CD8-positive, alpha-beta T cell (primary cell): ENCODE measurements at regions of chr6 and their contacts with region 1.

Region 1: GRCh38 chr6:141406761-141407160 is 726.0 kb upstream of the GJE1 start:
- DNase-seq: no peak
- ATAC-seq: no peak
- H3K4me3 ChIP-seq: no peak overlapping the region
- H3K4me3 Mint-ChIP-seq: no peak overlapping the region
- H3K27ac ChIP-seq: no peak overlapping the region
- H3K27ac Mint-ChIP-seq: no peak overlapping the region
- H3K4me1 ChIP-seq: no peaks in the 10 kb centered on the region
- H3K4me1 Mint-ChIP-seq: peaks cover 6% of the 10 kb centered on the region
- H3K27me3 ChIP-seq: no peaks in the 10 kb centered on the region
- H3K27me3 Mint-ChIP-seq: no peaks in the 10 kb centered on the region
- CTCF ChIP-seq: no peak

Region 2: DNA sequence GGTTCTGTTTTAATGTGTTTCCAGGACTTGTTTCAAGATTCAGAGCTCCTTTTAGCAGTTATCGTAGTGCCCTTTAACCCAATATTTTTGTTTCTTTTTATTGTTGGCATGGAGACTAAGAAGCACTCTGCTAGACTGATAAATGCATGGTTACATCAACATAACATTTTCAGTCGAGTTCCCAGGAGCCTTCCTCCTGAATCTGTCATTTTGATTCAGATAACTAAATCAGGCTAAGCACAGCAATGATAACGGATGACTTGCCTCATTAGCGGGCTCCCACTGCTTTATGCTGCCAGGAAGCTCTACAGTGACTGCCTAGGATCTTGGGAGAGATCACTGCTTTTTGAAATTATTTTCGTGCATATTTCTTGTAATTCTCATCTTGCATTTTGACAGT is 46.8 kb before region 1 on chr6:
- CTCF ChIA-PET with region 1: no interaction called
- POLR2A ChIA-PET with region 1: no interaction called
- intact Hi-C with region 1: no loop called
- DNase-seq: no peak
- ATAC-seq: no peak
- H3K4me3 ChIP-seq: no peak overlapping the region
- H3K4me3 Mint-ChIP-seq: no peak overlapping the region
- H3K27ac ChIP-seq: no peak overlapping the region
- H3K27ac Mint-ChIP-seq: no peak overlapping the region
- H3K4me1 ChIP-seq: no peaks in the 10 kb centered on the region
- H3K4me1 Mint-ChIP-seq: no peaks in the 10 kb centered on the region
- H3K27me3 ChIP-seq: no peaks in the 10 kb centered on the region
- H3K27me3 Mint-ChIP-seq: no peaks in the 10 kb centered on the region
- CTCF ChIP-seq: no peak

Region 3: DNA sequence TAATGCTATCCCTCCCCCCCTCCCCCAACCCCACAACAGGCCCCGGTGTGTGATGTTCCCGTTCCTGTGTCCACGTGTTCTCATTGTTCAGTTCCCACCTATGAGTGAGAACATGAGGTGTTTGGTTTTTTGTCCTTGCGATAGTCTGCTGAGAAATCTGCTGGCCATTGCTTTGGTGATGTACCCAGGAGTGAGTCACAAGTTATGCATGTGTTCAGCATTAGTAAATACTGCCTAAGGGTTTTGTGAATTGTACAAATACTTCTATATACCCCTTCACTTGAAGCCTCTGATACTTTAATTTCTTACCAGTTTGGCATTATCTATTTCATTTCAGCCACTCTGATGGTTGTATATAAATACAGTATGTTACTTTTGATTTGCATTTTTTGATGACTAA is 14.6 kb after region 1 on chr6:
- CTCF ChIA-PET with region 1: no interaction called
- POLR2A ChIA-PET with region 1: no interaction called
- intact Hi-C with region 1: loop called in 1 of 2 experiments (anchors 2 kb)
- DNase-seq: no peak
- ATAC-seq: no peak
- H3K4me3 ChIP-seq: no peak overlapping the region
- H3K4me3 Mint-ChIP-seq: no peak overlapping the region
- H3K27ac ChIP-seq: no peak overlapping the region
- H3K27ac Mint-ChIP-seq: no peak overlapping the region
- H3K4me1 ChIP-seq: no peaks in the 10 kb centered on the region
- H3K4me1 Mint-ChIP-seq: no peaks in the 10 kb centered on the region
- H3K27me3 ChIP-seq: no peaks in the 10 kb centered on the region
- H3K27me3 Mint-ChIP-seq: no peaks in the 10 kb centered on the region
- CTCF ChIP-seq: no peak